Dorsolateral prefrontal cortex (tissue), 120 donors: ENCODE measurements at regions of chr19 and their contacts with region 1.

Region 1: GRCh38 chr19:49850473-49851342 is at the start of gene PTOV1:
- DNase-seq: peak; percentile 91 to 97 (median 95)
- H3K4me3 ChIP-seq: peak within 1 kb of the TSS; percentile 68 to 98 (median 91)
- H3K27ac ChIP-seq: peak within 1 kb of the TSS; percentile 89 to 100 (median 99)
- H3K27me3 ChIP-seq: no peaks in the 10 kb centered on the region
- CTCF ChIP-seq: peak in 14 of 56 donors; percentile 4 to 38 (median 16)
- total RNA-seq, gene PTOV1: 186 to 437 (median 239) TPM

Region 2: GRCh38 chr19:49497047-49497788 is 353.5 kb before region 1 on chr19:
- intact Hi-C with region 1: loop called in 1 of 2 experiments (anchors 10 kb)
- DNase-seq: peak in 2 of 10 donors; percentile 47 to 51
- H3K4me3 ChIP-seq: peak overlapping the region; percentile 55 to 100 (median 92)
- H3K27ac ChIP-seq: peak overlapping the region in 56 of 59 donors; percentile 83 to 99 (median 96)
- H3K27me3 ChIP-seq: no peaks in the 10 kb centered on the region
- CTCF ChIP-seq: no peak

Region 3: DNA sequence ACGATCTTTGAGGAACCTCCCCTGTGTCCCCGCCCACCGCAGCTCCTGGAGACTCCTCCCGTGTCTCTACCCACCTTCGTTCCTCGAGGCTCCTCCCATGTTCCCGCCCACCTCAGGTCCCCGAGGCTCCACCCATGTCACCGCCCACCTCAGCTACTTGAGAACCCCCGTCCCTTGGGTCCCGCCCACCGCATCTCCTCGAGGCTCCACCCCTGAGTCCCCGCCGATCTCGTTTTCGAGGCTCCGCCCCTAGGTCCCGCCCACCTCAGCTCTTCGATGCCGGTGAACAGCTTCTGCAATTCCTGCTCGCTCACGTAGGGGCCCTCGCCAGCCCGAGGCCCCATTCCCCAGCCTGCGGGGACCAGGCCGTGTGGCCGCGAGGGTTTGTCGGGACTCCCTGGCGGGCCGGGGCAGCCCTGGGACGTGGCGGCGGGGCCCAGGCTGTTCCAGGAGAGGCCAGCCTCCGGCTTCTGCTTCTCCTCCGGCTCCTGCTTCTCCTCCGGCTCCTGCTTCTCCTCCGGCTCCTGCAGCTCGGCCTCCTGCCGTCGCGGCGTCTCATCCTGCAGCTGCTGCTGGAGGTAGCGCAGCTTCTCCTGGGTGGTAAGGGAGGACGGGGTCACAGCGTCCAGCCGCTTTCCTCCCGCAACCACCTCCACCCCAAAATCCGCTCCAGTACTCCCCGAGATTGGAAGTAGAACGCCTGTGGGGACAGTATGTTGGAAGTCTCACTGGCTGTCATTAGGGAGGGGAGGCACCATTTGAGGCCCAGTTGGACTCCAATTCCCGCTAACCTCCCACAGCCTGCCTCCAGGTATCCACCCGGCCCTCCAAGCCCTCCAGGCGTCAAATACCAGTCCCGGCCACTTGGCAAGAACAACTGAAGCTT is 104.3 kb before region 1 on chr19:
- intact Hi-C with region 1: no loop called
- DNase-seq: peak in 3 of 10 donors; percentile 46 to 60 (median 51)
- H3K4me3 ChIP-seq: peak overlapping the region in 2 of 59 donors; percentile 12 to 13
- H3K27ac ChIP-seq: no peak overlapping the region
- H3K27me3 ChIP-seq: no peaks in the 10 kb centered on the region
- CTCF ChIP-seq: no peak

Region 4: DNA sequence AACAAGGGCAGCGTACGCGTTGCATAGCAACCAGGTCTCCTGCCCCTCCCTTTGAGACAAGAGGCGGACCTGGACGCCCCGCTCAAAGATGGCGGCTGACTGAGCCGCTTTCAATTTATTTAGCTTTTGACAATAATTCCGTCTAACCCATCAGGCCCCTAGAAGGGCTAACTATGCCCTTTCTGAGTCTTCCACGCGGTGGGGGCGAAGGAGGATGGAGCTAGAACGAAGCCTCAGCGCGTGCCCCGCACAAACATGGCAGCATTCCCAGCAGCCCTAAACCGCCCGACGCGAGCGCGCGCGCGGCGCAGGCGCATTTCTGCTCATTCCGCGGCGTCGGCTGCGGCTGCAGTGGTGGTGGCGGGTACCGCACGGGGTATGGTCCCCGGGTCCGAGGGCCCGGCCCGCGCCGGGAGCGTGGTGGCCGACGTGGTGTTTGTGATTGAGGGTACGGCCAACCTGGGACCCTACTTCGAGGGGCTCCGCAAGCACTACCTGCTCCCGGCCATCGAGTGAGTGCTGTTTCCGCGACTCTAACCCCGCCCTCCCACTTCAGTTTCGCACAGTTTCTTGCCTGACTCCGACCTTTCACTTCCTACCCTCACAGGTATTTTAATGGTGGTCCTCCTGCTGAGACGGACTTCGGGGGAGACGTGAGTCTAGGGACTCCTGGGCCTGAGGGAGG is 32.6 kb before region 1 on chr19 and contains the start of gene MED25:
- intact Hi-C with region 1: loop called (anchors 2 kb)
- DNase-seq: peak; percentile 67 to 92 (median 78)
- H3K4me3 ChIP-seq: peak within 1 kb of the TSS; percentile 58 to 98 (median 88)
- H3K27ac ChIP-seq: peak within 1 kb of the TSS; percentile 89 to 100 (median 98)
- H3K27me3 ChIP-seq: no peaks in the 10 kb centered on the region
- CTCF ChIP-seq: peak in 49 of 56 donors; percentile 17 to 64 (median 46)
- total RNA-seq, gene MED25: 42.6 to 78.6 (median 57.7) TPM

Region 5: DNA sequence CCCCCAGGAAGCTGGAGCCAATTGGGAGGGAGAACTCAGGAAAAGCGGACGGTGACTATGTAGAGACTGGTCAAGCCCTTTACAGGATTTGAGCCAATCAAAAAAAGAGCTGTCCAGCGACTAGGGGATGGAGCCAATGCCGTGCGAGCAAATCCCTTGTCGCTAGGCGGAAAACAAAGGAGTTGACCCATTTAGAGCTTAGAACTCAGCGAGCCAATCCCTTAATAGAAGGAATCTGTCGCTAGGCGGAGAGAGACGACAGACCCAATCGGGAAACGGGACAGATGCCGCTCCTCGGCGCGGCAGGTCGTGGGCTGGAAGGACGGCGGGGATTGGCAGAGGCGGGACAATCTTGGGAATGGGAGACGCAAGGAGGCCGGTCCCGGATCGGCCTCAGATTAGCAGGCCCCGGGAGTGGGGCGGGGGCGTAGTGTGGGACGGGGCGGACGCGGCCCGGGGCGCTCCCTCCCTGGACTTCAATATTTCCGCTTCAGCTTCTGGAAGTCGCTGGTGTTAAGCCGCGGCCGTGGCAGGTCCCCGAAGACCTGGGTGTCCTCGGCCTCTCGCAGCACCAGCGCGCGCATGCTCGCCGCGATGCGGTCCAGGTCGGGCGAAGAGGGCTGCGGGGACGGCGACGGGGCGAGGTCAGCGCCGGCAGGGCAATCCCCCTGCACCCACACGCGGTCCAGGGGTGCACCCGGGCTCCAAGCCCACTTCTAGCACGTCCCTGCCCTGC is 18.9 kb after region 1 on chr19:
- intact Hi-C with region 1: loop called in 1 of 2 experiments (anchors 1 kb)
- DNase-seq: peak; percentile 85 to 99 (median 98)
- H3K4me3 ChIP-seq: peak overlapping the region; percentile 52 to 94 (median 70)
- H3K27ac ChIP-seq: peak overlapping the region; percentile 86 to 99 (median 96)
- H3K27me3 ChIP-seq: no peaks in the 10 kb centered on the region
- CTCF ChIP-seq: peak in 45 of 56 donors; percentile 10 to 68 (median 39)

Region 6: GRCh38 chr19:49877020-49877878 is 26.5 kb after region 1 on chr19 and contains the starts of genes AKT1S1 and TBC1D17:
- intact Hi-C with region 1: loop called in 1 of 2 experiments (anchors 1 kb)
- DNase-seq: peak; percentile 98 to 100 (median 99)
- H3K4me3 ChIP-seq: peak within 1 kb of the TSS; percentile 71 to 100 (median 96)
- H3K27ac ChIP-seq: peak within 1 kb of the TSS; percentile 93 to 100 (median 100)
- H3K27me3 ChIP-seq: no peaks in the 10 kb centered on the region
- CTCF ChIP-seq: peak in 4 of 56 donors; percentile 6 to 13 (median 11)
- total RNA-seq, gene AKT1S1: 19.9 to 42.2 (median 27.8) TPM
- total RNA-seq, gene TBC1D17: 61.4 to 116 (median 85.9) TPM